Vagina (tissue), 2 donors: ENCODE measurements at regions of chr19 and their contacts with region 1.

Region 1: GRCh38 chr19:6056801-6057650 is 53.3 kb downstream of the RFX2 start:
- DNase-seq: peak; percentile 72 to 97
- H3K4me3 ChIP-seq: peak overlapping the region; percentile 13 to 23
- H3K27ac ChIP-seq: peak overlapping the region; percentile 93
- H3K4me1 ChIP-seq: peaks cover 60% of the 10 kb centered on the region
- H3K27me3 ChIP-seq: no peaks in the 10 kb centered on the region
- CTCF ChIP-seq: peak in 1 of 3 experiments; percentile 5
- POLR2A ChIP-seq: no peak

Region 2: GRCh38 chr19:5775668-5776309 is 281.2 kb before region 1 on chr19:
- intact Hi-C with region 1: no loop called
- DNase-seq: peak in 1 of 2 donors; percentile 93
- H3K4me3 ChIP-seq: no peak overlapping the region
- H3K27ac ChIP-seq: no peak overlapping the region
- H3K4me1 ChIP-seq: no peaks in the 10 kb centered on the region
- H3K27me3 ChIP-seq: no peaks in the 10 kb centered on the region
- CTCF ChIP-seq: no peak
- POLR2A ChIP-seq: no peak

Region 3: DNA sequence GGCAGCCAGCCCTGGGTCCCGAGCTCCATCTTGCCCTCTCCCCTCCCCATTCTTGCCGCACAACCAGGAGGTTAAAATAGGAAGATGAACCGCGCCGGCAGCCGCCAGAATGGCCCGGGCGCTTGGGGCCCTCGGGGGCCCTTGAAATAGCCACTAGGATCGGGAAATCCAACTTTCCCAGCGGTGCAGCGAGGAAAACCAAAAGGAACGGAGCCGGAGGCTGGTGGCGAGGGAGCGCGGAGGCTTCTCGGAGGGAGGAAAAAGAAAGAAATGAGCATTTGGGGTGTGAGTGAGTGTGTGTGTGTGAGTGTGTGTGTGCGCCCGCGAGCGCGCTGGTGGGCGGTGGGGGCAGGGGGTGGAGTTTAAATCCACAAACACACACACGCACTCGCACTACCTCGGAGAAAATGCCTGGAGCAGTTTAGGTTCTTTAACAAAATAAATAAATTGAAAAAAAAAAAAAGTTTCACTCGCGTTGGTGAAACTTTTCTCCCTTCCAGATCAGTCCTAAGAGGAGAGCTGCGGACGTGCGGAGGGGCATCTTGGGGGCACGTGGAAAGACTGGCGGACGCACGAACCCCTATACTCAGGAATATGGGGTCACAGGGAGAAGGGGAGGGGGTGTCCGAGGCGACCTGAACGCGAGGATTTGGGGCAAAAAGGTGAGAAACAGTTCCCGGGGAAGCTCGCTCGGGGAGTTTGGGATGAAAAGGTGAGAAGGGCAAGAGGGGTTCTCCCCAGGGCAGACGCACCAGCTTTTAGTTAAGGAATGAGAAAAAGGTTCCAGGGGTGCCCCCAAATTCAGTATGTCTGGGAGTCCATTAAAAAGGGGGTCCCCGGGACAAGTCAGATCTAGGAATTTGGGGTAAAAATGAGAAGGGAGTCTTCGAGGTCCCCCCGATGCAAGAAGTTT is 52.0 kb after region 1 on chr19:
- intact Hi-C with region 1: loop called (anchors 5 kb)
- DNase-seq: no peak
- H3K4me3 ChIP-seq: peak overlapping the region; percentile 64 to 88
- H3K27ac ChIP-seq: peak overlapping the region; percentile 80
- H3K4me1 ChIP-seq: peaks cover 30% of the 10 kb centered on the region
- H3K27me3 ChIP-seq: no peaks in the 10 kb centered on the region
- CTCF ChIP-seq: no peak
- POLR2A ChIP-seq: peak in 1 of 2 donors; percentile 13

Region 4: DNA sequence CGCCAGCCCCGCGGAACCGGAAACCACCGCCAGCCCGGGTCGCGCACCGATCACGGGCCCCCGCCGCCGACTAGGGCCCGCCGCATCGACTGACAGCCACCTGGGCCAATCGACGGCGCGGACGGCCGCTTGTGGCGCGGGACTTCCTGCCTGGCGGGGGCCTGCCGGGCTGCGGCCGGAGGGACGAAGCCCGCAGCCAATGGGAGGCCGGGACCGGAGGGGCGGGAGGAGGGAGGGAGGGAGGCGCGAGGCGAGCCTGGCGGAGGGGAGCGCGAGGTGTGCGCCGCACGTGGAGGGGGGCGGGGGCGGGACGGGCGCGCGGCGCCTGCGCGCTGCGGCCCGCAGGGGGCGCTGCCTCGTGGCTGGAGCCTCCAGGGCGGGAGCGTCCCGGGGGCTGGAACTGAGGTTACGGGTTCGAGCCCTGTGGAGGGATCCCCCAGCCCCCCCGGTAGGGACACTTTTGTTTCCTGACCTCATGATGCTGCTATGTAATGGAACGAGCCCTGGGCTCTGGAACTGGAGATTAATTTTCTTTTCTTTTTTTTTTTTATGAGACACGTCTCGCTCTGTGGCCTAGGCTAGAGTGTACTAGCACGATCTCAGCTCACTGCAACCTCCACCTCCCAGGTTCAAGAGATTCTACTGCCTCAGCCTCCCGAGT is 223.0 kb after region 1 on chr19 and contains the start of gene MLLT1:
- intact Hi-C with region 1: loop called (anchors 5 kb)
- DNase-seq: peak in 1 of 2 donors; percentile 94
- H3K4me3 ChIP-seq: peak within 1 kb of the TSS; percentile 68 to 84
- H3K27ac ChIP-seq: peak within 1 kb of the TSS; percentile 89
- H3K4me1 ChIP-seq: peaks cover 42% of the 10 kb centered on the region
- H3K27me3 ChIP-seq: no peaks in the 10 kb centered on the region
- CTCF ChIP-seq: peak; percentile 11 to 76 (median 45)
- POLR2A ChIP-seq: peak in 1 of 2 donors; percentile 19
- total RNA-seq, gene MLLT1: 25.5 TPM